Head of caudate nucleus (tissue), 42 donors: ENCODE measurements at regions of chr6 and their contacts with region 1.

Region 1: GRCh38 chr6:45421709-45422502 is 44.2 kb upstream of the SUPT3H start:
- DNase-seq: peak; percentile 33 to 86 (median 72)

Region 2: DNA sequence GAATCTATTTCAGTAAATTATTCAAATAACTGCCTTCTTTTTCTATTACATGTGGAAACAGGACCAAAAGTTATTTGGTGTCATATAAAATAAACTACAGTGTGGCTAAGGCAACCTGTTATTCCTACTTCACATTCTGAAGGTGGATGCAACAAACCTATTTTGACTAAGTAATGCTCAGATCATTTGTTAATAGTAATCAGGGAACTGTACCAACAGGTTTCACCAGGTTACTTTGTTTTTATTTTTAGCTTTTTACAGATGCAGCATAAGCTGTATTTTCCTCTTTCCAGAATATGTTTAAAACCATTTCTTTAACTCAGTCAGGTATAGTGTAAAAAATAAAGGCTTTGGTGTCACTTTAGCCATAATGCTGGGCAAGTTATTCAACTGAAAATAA is 38.2 kb before region 1 on chr6:
- intact Hi-C with region 1: loop called (anchors 5 kb)
- DNase-seq: no peak

Region 3: GRCh38 chr6:45714741-45715507 is 293.0 kb after region 1 on chr6:
- intact Hi-C with region 1: loop called (anchors 5 kb)
- DNase-seq: peak in 37 of 42 donors; percentile 14 to 87 (median 66)